ENCODE measurements at regions of chr12 and their contacts with region 1.

Region 1: DNA sequence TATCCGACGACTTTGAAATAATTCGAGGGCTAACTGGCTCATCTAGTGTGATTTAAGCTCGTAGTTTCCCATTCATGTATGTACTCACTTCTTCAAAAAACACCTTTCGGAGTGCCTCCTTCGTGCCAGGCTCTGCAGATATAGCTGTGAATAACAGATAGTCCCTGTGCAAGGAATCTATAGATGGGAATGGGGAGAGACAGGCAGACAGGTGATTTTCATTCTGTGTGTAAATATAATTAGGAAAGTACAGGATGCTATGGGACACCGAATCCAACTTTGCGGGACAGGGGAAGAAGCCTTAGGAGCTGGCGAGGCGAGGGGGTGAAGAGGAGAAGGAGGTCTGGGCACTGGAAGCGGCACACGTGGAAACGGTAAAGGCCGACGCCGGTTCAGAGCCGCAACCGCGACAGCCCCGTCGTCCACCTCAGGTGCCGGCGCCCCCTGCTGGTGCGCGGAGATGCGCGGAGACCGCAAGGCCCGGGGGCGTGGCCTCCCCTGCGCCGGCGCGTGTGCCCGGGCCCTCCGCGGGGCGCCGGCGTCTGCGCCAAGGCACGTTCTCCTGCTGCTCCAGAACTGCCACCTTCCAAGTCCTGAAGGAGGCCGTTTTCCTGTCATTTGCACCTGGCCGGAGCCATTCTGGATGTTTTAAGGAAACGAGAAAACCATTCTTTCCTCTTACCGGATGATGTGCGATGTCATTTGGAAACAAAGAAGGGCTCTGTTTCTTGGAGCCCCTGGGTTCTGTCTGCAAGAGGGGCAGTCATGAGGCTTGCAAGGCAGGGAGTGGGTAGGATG is 18.0 kb upstream of the CACNA1C start:
- DNase-seq: peak; percentile 88 to 93 (median 89)
- ATAC-seq: peak; percentile 43 to 87 (median 82)
- H3K4me3 ChIP-seq: peak overlapping the region in 10 of 12 donors; percentile 17 to 55 (median 46)
- H3K27ac ChIP-seq: peak overlapping the region in 7 of 12 donors; percentile 3 to 68 (median 23)
- H3K4me1 ChIP-seq: peaks cover 5 to 94% (median 30%) of the 10 kb centered on the region in 12 donors
- H3K27me3 ChIP-seq: no peaks in the 10 kb centered on the region
- CTCF ChIP-seq: peak; percentile 77 to 99 (median 96)
- POLR2A ChIP-seq: no peak

Region 2: DNA sequence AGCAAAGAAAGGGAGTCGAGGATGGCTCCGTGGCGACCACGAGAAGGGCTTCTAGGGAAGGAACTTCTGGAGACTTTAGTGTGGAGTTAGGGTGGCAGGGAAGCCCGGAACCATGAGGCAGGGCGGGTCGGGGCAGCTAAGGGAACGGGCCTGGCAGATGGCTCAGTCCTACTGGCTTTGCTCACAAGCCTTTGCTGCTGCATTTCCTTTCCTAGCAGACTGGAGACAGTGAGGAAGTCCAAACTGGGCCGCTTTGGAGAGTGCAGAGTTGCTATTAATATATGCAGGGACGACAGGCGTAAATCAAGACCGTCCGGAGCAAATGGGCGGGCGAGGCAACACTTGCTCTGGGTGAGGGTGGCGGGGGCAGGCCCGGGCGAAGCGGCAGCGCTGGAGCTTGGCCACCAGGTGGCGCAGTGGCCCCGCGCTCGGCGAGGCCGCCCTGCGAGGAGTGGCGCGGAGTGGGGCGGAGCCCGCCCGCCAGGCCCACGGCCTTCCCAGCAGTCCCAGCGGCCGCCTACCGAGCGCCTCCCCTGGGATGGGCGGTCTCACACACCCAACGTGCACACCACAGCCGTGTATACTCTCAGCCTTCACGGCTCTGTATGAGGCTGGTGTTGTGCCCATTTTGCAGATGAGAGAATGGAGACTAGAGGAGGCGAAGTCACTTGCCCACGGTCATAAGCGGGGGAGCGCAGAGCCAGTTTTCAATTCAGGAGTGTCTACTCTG is 238.9 kb before region 1 on chr12:
- intact Hi-C with region 1: loop called in 8 of 10 experiments (anchors 2 to 10 kb)
- DNase-seq: peak; percentile 92 to 98 (median 96)
- ATAC-seq: peak; percentile 92 to 96 (median 94)
- H3K4me3 ChIP-seq: peak overlapping the region; percentile 47 to 79 (median 64)
- H3K27ac ChIP-seq: peak overlapping the region; percentile 49 to 95 (median 84)
- H3K4me1 ChIP-seq: peaks cover 8 to 46% (median 26%) of the 10 kb centered on the region in 12 donors
- H3K27me3 ChIP-seq: no peaks in the 10 kb centered on the region
- CTCF ChIP-seq: peak; percentile 92 to 100 (median 99)
- POLR2A ChIP-seq: peak in 1 of 2 donors; percentile 70

Region 3: GRCh38 chr12:1966561-1967226 is 68.1 kb before region 1 on chr12:
- intact Hi-C with region 1: loop called in 5 of 10 experiments (anchors 5 to 10 kb)
- DNase-seq: peak in 3 of 5 donors; percentile 33 to 62 (median 35)
- ATAC-seq: peak; percentile 72 to 89 (median 80)
- H3K4me3 ChIP-seq: no peak overlapping the region
- H3K27ac ChIP-seq: peak overlapping the region in 8 of 12 donors; percentile 2 to 89 (median 47)
- H3K4me1 ChIP-seq: peaks cover 0 to 16% (median 5%) of the 10 kb centered on the region in 12 donors
- H3K27me3 ChIP-seq: no peaks in the 10 kb centered on the region
- CTCF ChIP-seq: no peak
- POLR2A ChIP-seq: no peak

Region 4: DNA sequence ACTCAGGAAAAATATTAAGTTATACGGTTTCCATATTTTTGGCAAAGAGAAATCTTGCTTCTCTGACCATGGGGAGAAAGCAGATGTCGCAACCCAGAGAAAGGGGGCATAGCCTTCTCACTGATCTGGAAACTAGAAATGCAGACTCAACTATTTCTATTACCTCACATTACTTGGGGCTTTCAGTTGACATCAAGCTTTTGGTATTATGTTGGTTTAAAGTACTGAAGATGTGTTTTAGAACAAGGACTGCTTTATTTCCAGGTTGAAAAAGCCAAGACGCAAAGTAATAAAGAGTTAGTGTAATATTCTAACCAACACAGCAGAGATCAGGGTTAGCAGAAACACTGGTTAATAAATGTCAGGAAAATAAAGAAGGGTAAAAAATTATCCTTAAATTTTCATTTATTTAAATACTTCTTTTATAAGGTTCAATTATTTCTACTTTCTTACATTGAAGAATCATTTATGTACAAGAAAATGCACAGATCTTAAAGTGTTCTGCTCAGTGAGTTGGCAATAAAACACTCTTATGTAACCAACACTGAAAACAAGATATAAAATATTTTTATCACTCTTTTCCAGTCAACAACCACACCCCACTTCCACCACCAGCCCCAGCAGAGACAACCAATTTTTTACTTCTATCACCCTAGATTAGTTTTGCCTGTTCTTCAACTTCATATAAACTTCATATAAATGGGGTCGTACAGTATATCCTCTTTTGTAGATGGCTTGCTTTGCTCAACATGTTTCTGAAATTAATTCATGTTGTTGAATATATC is 56.6 kb before region 1 on chr12:
- intact Hi-C with region 1: loop called in 6 of 10 experiments (anchors 5 to 10 kb)
- DNase-seq: no peak
- ATAC-seq: no peak
- H3K4me3 ChIP-seq: peak overlapping the region in 2 of 12 donors; percentile 5 to 7
- H3K27ac ChIP-seq: peak overlapping the region in 9 of 12 donors; percentile 23 to 92 (median 87)
- H3K4me1 ChIP-seq: peaks cover 0 to 42% (median 17%) of the 10 kb centered on the region in 12 donors
- H3K27me3 ChIP-seq: no peaks in the 10 kb centered on the region
- CTCF ChIP-seq: no peak
- POLR2A ChIP-seq: no peak

Region 5: DNA sequence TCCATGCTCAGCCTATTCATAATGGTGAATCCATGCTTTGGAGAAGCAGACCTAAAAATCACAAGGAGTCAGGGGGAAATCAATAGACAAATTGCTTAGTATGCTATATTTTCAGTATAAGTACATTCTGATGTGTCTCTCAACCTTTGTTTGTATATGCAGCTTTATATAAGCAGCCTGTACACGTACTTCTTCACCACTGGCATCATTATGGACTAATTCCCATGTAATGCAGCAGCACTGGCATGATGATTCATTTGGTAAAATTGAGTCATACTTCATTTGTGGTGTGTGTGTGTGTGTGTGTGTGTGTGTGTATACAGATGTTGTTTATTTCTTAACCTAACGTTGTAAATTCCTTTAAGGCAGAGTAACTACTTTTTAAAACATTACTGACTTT is 41.5 kb before region 1 on chr12:
- intact Hi-C with region 1: loop called in 1 of 10 experiments (anchors 5 kb)
- DNase-seq: no peak
- ATAC-seq: peak in 3 of 4 donors; percentile 23 to 45 (median 36)
- H3K4me3 ChIP-seq: no peak overlapping the region
- H3K27ac ChIP-seq: peak overlapping the region in 2 of 12 donors; percentile 62 to 74
- H3K4me1 ChIP-seq: peaks cover 0 to 52% (median 11%) of the 10 kb centered on the region in 12 donors
- H3K27me3 ChIP-seq: no peaks in the 10 kb centered on the region
- CTCF ChIP-seq: no peak
- POLR2A ChIP-seq: no peak